Posterior vena cava (tissue), 2 donors: ENCODE measurements at regions of chr7 and their contacts with region 1.

Region 1: GRCh38 chr7:42456756-42457276 is 219.8 kb upstream of the GLI3 start:
- DNase-seq: no peak

Region 2: DNA sequence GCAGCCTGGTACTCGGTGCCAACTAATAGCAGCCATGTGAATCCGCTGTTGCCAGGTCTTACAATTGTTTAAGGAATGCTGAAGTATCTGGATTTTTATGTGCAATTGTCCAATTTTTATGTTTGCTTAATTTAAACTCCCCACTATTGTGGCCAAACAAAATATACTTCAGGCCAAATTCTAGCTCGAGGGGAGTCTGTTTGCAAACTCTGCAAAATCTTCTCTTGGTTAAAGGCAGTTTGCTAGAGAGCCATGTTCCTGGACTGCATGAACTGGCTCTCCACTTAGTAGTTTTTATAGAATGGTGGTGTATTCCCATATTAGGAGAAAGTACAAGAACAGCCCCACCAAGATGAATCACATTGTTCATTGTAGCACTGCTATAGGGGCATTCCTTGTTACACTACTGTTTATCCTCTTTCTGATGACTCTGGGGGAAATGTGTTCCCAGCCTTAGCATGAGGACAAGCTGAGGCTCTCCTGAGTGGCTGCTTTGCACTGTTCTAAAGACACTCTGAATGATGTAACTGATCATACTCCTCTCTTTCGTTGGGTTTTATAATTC is 41.8 kb before region 1 on chr7:
- intact Hi-C with region 1: no loop called
- DNase-seq: no peak

Region 3: GRCh38 chr7:42537066-42537465 is 80.2 kb after region 1 on chr7:
- intact Hi-C with region 1: no loop called
- DNase-seq: no peak

Region 4: GRCh38 chr7:42736931-42737330 is 280.1 kb after region 1 on chr7:
- intact Hi-C with region 1: loop called in 1 of 2 experiments (anchors 2 kb)
- DNase-seq: no peak